ENCODE measurements at regions of chr12 and their contacts with region 1.

Region 1: GRCh38 chr12:64759035-64759901 is at the start of gene GNS:
- DNase-seq: peak; percentile 86 to 94 (median 89)
- H3K4me3 ChIP-seq: peak within 1 kb of the TSS; percentile 45 to 86
- H3K4me3 Mint-ChIP-seq: peak within 1 kb of the TSS; percentile 89 to 99 (median 98)
- H3K27ac ChIP-seq: peak within 1 kb of the TSS; percentile 74
- H3K27ac Mint-ChIP-seq: peak within 1 kb of the TSS; percentile 93 to 98 (median 96)
- H3K4me1 ChIP-seq: peaks cover 35% of the 10 kb centered on the region
- H3K4me1 Mint-ChIP-seq: peaks cover 27 to 52% (median 40%) of the 10 kb centered on the region in 4 donors
- H3K27me3 ChIP-seq: no peaks in the 10 kb centered on the region
- H3K27me3 Mint-ChIP-seq: no peaks in the 10 kb centered on the region
- total RNA-seq, gene GNS: 34.2 to 35.0 TPM

Region 2: DNA sequence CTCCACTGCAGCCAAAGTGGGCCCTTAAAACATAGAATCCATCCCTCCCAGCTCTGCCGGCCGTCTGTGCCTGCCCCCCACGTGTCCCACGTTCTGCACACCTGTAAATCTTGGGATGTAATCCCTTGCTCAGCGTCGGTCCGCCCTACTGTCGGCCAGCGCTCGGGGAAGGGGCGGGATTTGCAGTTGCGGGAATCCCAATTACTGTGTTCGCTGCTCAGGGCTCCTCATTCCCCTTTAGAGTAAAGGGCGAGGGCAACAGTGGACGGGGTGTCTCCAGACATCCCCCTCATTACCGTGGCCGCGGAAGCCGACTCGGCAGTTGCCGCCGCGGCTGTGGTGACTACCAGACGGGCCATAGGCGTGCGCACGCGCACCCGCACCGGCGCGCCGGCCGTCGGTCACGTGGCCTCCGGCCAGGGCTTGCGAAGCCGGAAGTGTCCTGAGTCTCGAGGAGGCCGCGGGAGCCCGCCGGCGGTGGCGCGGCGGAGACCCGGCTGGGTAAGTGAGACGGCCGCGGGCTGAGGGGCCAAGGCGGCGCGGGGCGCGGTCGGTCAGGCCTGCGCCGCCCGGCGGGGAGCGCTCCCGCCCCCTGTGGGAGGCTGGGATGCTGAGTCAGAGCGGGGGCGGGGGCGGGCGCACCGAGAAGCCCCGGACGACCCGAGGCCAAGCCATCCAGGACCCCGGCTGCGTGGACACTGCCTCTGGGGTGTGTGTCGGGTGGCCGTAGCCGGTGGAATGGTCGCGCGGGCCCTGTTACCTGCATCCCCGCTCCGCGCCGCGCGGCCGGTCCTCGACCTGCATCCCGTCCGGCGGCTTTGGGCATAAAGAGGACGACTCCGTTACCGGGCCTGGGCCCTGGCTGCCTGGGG is 307.3 kb before region 1 on chr12 and contains the start of gene TBK1:
- CTCF ChIA-PET with region 1: no interaction called
- POLR2A ChIA-PET with region 1: no interaction called
- intact Hi-C with region 1: loop called (anchors 5 kb)
- DNase-seq: peak; percentile 42 to 66 (median 50)
- H3K4me3 ChIP-seq: peak within 1 kb of the TSS; percentile 87 to 97
- H3K4me3 Mint-ChIP-seq: peak within 1 kb of the TSS; percentile 94 to 98 (median 96)
- H3K27ac ChIP-seq: peak within 1 kb of the TSS; percentile 92
- H3K27ac Mint-ChIP-seq: peak within 1 kb of the TSS; percentile 93 to 99 (median 97)
- H3K4me1 ChIP-seq: peaks cover 51% of the 10 kb centered on the region
- H3K4me1 Mint-ChIP-seq: peaks cover 33 to 59% (median 44%) of the 10 kb centered on the region in 4 donors
- H3K27me3 ChIP-seq: no peaks in the 10 kb centered on the region
- H3K27me3 Mint-ChIP-seq: no peaks in the 10 kb centered on the region
- total RNA-seq, gene TBK1: 23.8 to 25.0 TPM

Region 3: GRCh38 chr12:64480148-64480547 is 279.1 kb before region 1 on chr12:
- CTCF ChIA-PET with region 1: no interaction called
- POLR2A ChIA-PET with region 1: no interaction called
- intact Hi-C with region 1: no loop called
- DNase-seq: no peak
- H3K4me3 ChIP-seq: no peak overlapping the region
- H3K4me3 Mint-ChIP-seq: no peak overlapping the region
- H3K27ac ChIP-seq: no peak overlapping the region
- H3K27ac Mint-ChIP-seq: peak overlapping the region in 1 of 7 donors; percentile 3
- H3K4me1 ChIP-seq: no peaks in the 10 kb centered on the region
- H3K4me1 Mint-ChIP-seq: peaks cover 6 to 8% (median 7%) of the 10 kb centered on the region in 4 donors
- H3K27me3 ChIP-seq: no peaks in the 10 kb centered on the region
- H3K27me3 Mint-ChIP-seq: no peaks in the 10 kb centered on the region

Region 4: DNA sequence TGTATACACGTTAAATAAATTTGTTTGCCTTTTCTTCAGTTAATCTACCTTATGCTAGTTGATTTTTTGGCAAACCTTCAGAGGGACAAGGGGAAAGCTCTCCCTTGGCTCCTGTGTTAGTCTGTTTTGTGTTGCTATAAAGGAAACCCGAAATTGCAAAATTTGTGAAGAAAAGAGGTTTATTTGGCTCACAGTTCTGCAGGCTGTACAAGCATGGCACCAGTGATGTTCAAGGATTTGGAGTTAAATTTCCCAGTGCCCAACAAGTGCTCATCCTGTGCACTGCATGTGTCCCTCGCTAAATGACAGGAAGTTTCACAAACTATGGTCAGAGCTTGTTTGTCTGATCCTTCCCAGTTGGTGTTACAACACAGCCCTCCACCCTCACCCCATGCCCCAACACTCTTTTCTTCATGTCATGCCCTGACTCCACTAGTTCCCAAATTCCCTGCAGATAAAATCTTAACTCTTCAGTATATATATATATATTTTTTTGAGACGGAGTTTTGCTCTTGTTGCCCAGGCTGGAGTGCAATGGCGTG is 162.9 kb before region 1 on chr12:
- CTCF ChIA-PET with region 1: no interaction called
- POLR2A ChIA-PET with region 1: no interaction called
- intact Hi-C with region 1: no loop called
- DNase-seq: no peak
- H3K4me3 ChIP-seq: no peak overlapping the region
- H3K4me3 Mint-ChIP-seq: peak overlapping the region in 1 of 8 donors; percentile 55
- H3K27ac ChIP-seq: no peak overlapping the region
- H3K27ac Mint-ChIP-seq: peak overlapping the region in 3 of 7 donors; percentile 5 to 66 (median 23)
- H3K4me1 ChIP-seq: peaks cover 43% of the 10 kb centered on the region
- H3K4me1 Mint-ChIP-seq: peaks cover 30 to 49% (median 38%) of the 10 kb centered on the region in 4 donors
- H3K27me3 ChIP-seq: no peaks in the 10 kb centered on the region
- H3K27me3 Mint-ChIP-seq: no peaks in the 10 kb centered on the region

Measured in CD4-positive, alpha-beta memory T cell (primary cell).